ENCODE measurements at regions of chr13 and their contacts with region 1.

Region 1: GRCh38 chr13:43804461-43805070 is 17.8 kb upstream of the ENOX1 start:
- DNase-seq: peak; percentile 19
- ATAC-seq: peak; percentile 28
- H3K4me3 Mint-ChIP-seq: no peak overlapping the region
- H3K27ac Mint-ChIP-seq: no peak overlapping the region
- H3K4me1 Mint-ChIP-seq: peaks cover 10% of the 10 kb centered on the region
- H3K27me3 Mint-ChIP-seq: peaks cover 19% of the 10 kb centered on the region

Region 2: GRCh38 chr13:42594970-42595571 is 1209.5 kb before region 1 on chr13:
- CTCF ChIA-PET with region 1: no interaction called
- POLR2A ChIA-PET with region 1: no interaction called
- intact Hi-C with region 1: loop called (anchors 2 kb)
- DNase-seq: peak; percentile 71
- ATAC-seq: peak; percentile 61
- H3K4me3 Mint-ChIP-seq: no peak overlapping the region
- H3K27ac Mint-ChIP-seq: no peak overlapping the region
- H3K4me1 Mint-ChIP-seq: peaks cover under 1% of the 10 kb centered on the region
- H3K27me3 Mint-ChIP-seq: no peaks in the 10 kb centered on the region

Region 3: DNA sequence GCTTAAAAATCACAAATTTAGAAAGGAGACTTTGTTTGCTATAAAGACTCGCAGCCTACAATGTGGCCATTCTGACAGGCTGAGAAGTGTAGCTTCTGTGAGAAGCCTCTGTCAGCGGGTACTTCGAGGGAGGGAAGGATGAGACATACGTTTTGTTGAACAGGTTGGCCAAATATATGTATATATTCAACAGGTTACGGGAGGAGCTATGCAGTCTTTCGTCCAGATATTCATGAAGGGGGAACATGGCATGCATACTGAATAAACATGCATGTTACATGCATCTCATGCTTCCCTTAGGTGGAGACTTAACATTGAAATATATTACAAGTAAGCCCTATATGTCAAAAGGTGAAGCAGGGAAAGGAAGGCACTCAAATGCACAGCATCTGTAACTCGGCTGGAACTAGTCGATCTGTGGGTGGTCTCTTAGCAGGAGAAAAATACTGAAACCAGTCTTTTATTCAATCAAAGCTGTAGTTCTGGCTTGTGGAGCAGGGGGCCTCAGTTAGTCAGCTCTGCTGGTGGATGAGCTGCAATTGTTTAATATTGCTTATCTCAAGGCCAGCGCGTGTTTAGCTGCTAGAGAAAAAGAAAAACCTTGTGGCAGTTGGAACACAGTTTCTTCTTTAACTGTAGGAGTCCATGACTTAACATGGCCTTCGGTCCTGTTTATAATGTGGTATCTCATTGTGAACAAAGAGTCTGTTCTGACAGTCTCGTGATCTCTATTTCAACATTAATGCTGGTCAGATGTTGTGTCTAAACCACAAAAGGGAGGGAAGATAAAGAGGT is 928.9 kb before region 1 on chr13:
- CTCF ChIA-PET with region 1: no interaction called
- POLR2A ChIA-PET with region 1: no interaction called
- intact Hi-C with region 1: loop called in 1 of 2 experiments (anchors 2 kb)
- DNase-seq: no peak
- ATAC-seq: peak; percentile 10
- H3K4me3 Mint-ChIP-seq: no peak overlapping the region
- H3K27ac Mint-ChIP-seq: no peak overlapping the region
- H3K4me1 Mint-ChIP-seq: peaks cover 17% of the 10 kb centered on the region
- H3K27me3 Mint-ChIP-seq: peaks cover 17% of the 10 kb centered on the region

Region 4: GRCh38 chr13:42969558-42970172 is 834.9 kb before region 1 on chr13:
- CTCF ChIA-PET with region 1: interaction called, 13 read pairs
- POLR2A ChIA-PET with region 1: no interaction called
- intact Hi-C with region 1: loop called (anchors 1 to 5 kb)
- DNase-seq: peak; percentile 90
- ATAC-seq: peak; percentile 79
- H3K4me3 Mint-ChIP-seq: no peak overlapping the region
- H3K27ac Mint-ChIP-seq: no peak overlapping the region
- H3K4me1 Mint-ChIP-seq: peaks cover 30% of the 10 kb centered on the region
- H3K27me3 Mint-ChIP-seq: no peaks in the 10 kb centered on the region

Region 5: DNA sequence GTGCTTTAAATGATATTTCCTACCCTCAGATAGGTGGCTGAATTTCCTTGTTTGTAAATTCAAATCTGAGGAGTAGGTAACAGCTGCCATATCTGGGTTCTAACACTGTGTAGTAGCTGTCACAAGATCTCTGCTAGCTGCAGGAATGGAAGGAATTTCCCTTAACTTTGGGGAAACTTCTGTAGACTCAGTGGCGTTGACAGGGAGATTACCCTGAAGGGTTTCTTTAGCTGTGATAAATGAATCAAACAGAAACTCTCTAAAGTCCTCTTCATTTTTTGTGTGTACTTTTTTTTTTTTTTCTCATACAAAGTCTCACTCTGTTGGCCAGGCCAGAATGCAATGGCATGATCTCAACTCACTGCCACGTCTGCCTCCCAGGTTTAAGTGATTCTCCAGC is 807.2 kb before region 1 on chr13:
- CTCF ChIA-PET with region 1: no interaction called
- POLR2A ChIA-PET with region 1: interaction called, 10 read pairs
- intact Hi-C with region 1: no loop called
- DNase-seq: no peak
- ATAC-seq: peak; percentile 43
- H3K4me3 Mint-ChIP-seq: no peak overlapping the region
- H3K27ac Mint-ChIP-seq: peak overlapping the region; percentile 68
- H3K4me1 Mint-ChIP-seq: peaks cover 41% of the 10 kb centered on the region
- H3K27me3 Mint-ChIP-seq: no peaks in the 10 kb centered on the region

Region 6: GRCh38 chr13:43085545-43085944 is 719.0 kb before region 1 on chr13:
- CTCF ChIA-PET with region 1: no interaction called
- POLR2A ChIA-PET with region 1: no interaction called
- intact Hi-C with region 1: loop called in 1 of 2 experiments (anchors 5 kb)
- DNase-seq: no peak
- ATAC-seq: no peak
- H3K4me3 Mint-ChIP-seq: no peak overlapping the region
- H3K27ac Mint-ChIP-seq: no peak overlapping the region
- H3K4me1 Mint-ChIP-seq: peaks cover 16% of the 10 kb centered on the region
- H3K27me3 Mint-ChIP-seq: no peaks in the 10 kb centered on the region

Region 7: DNA sequence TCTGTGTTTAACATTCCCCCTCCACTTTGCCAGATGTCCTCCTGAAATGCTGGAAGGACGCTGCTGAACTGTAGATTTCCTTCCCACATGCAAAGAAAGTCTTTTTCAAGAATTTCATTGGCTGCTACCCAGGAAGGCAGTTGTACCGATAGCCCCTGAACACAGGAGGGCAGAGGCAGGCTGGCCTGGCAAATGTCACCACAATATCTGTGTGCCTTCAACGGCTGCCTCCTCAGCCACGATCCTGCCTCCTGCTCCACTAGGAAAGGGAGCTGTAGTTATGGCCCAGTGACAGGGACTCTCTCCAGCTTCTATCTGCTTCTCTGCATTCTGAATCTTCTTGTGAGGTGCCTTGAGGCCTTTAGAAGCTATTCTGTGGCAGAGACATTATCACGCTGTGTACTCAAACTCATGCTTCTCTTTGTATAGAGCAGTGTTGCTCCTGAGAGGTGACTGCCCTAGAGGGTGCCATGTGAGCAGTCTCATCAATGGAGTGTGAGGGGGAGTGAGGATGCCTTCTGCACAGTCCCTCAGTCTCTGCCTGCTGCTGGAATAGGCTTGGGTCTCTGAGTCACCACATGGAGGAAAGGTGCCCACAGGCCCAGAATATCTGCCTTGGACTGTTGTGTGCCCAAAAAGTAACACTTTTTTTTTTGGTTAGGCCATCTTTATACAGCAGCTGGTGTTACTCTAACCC is 501.4 kb before region 1 on chr13:
- CTCF ChIA-PET with region 1: interaction called, 4 read pairs
- POLR2A ChIA-PET with region 1: no interaction called
- intact Hi-C with region 1: loop called in 1 of 2 experiments (anchors 5 kb)
- DNase-seq: peak; percentile 39
- ATAC-seq: no peak
- H3K4me3 Mint-ChIP-seq: no peak overlapping the region
- H3K27ac Mint-ChIP-seq: no peak overlapping the region
- H3K4me1 Mint-ChIP-seq: no peaks in the 10 kb centered on the region
- H3K27me3 Mint-ChIP-seq: peaks cover 14% of the 10 kb centered on the region